Activated CD4-positive, alpha-beta memory T cell treated with anti-CD3 and anti-CD28 coated beads, Interleukin-2, amount 10 ng/mL, durations not matched to agents 7 days and 5 days (primary cell): ENCODE measurements at regions of chr11 and their contacts with region 1.

Region 1: DNA sequence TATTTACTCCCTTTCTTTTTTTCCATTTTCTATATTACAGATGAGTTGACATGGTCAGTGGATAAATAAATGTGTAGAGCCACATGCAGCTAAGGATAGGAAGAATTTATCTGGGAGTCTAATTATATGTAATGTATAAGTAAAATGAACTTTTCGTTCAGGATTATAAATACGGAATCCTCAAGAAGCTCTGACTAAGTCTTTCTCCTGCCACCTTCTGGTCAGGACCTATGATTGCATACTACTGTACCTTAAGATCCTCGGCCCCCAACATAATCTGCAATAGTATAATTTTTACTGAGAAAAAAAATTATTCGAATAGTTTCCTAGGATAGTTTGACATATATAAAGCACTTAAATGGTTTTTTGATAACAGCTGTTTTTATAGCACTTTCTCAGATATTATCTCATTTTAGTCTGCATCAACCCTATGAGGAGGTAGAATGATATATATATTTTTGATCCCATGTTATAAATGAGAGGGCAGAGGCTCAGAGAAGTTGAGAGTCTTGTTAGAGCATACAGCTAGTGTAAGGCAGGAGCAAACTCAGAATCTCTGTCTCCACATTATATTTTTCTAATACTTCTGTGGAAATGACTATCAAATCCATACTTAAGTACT is 36.1 kb downstream of the CCDC90B start:
- DNase-seq: no peak
- H3K4me3 Mint-ChIP-seq: no peak overlapping the region
- H3K27ac Mint-ChIP-seq: no peak overlapping the region
- H3K4me1 Mint-ChIP-seq: peaks cover 10% of the 10 kb centered on the region
- H3K27me3 Mint-ChIP-seq: no peaks in the 10 kb centered on the region

Region 2: GRCh38 chr11:82906244-82906654 is 343.8 kb before region 1 on chr11:
- CTCF ChIA-PET with region 1: interaction called, 23 read pairs
- POLR2A ChIA-PET with region 1: interaction called, 12 read pairs
- DNase-seq: no peak
- H3K4me3 Mint-ChIP-seq: no peak overlapping the region
- H3K27ac Mint-ChIP-seq: no peak overlapping the region
- H3K4me1 Mint-ChIP-seq: peaks cover 46% of the 10 kb centered on the region
- H3K27me3 Mint-ChIP-seq: no peaks in the 10 kb centered on the region

Region 3: DNA sequence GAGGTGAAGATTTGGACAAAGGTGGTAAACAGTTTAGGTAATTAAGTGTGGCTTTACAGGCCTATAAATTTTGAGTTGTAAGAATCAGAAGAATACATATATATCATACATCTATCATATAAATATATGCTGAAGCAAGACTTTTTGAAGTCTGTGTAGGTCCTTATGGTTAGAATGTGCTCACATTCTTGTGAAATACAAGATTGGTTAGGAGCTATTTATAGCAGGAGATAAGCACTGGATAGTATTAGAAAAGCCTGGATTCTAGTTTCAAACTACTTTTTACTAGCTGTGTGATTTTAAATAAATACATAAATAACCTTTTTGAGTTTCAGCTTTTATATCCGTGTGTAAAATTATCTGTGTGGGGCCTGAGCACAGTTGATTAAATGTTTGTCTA is 14.3 kb before region 1 on chr11:
- CTCF ChIA-PET with region 1: interaction called, 11 read pairs
- POLR2A ChIA-PET with region 1: no interaction called
- DNase-seq: no peak
- H3K4me3 Mint-ChIP-seq: no peak overlapping the region
- H3K27ac Mint-ChIP-seq: no peak overlapping the region
- H3K4me1 Mint-ChIP-seq: no peaks in the 10 kb centered on the region
- H3K27me3 Mint-ChIP-seq: no peaks in the 10 kb centered on the region

Region 4: GRCh38 chr11:83438438-83438837 is 188.4 kb after region 1 on chr11:
- CTCF ChIA-PET with region 1: no interaction called
- POLR2A ChIA-PET with region 1: no interaction called
- DNase-seq: no peak
- H3K4me3 Mint-ChIP-seq: no peak overlapping the region
- H3K27ac Mint-ChIP-seq: no peak overlapping the region
- H3K4me1 Mint-ChIP-seq: no peaks in the 10 kb centered on the region
- H3K27me3 Mint-ChIP-seq: no peaks in the 10 kb centered on the region